K562 (cell line): ENCODE measurements at regions of chr11 and their contacts with region 1.

Region 1: DNA sequence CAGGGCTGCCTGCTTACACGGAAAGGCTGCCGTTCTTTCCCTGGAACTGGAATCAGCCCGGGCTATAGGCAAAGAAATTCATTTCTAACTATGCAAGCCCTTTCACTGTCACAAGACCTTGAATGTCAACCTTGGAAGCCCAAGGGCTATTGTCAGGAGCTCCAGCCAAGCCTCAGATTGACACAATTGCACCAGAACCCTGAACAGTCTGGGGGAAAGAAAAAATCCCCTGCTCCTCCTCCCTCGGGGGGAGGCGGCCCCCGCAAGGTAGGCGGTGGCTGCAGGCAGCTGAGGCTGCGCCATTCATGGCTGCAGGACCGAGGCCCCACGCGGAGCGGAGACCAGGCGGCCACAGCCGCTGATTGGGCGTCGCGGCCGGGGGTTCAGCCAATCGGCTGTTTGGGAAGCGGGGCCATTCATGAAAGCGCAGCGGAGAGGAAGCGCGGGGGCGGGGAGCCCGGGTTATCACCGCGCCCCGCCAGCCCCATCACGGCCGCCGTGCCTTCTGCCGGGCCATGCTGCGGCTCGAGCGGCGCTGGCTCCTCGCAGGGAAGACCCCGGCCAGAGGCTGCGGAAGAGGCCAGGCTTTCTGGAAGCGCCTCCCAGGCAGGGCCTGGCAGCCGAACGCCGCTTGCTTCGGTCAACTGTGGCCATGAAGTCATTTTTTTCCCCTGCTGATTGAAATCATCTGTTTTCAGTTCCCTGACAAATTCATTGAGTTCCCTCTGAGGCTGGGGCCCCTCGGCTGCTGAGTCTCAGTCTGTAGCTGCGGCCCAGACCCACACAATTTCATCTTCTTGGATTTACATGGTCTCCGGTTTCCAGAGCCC is 38.1 kb upstream of the LINC01488 start:
- DNase-seq: peak; percentile 99
- ATAC-seq: peak; percentile 94
- H3K4me3 ChIP-seq: peak overlapping the region; percentile 35
- H3K27ac ChIP-seq: peak overlapping the region; percentile 95
- H3K4me1 ChIP-seq: peaks cover 54 to 61% of the 10 kb centered on the region in 2 experiments
- H3K27me3 ChIP-seq: no peaks in the 10 kb centered on the region
- CTCF ChIP-seq: no peak
- EP300 ChIP-seq: no peak
- POLR2A ChIP-seq: peak; percentile 93
- RAD21 ChIP-seq: no peak; a peak in 1 of 4 replicates

Region 2: DNA sequence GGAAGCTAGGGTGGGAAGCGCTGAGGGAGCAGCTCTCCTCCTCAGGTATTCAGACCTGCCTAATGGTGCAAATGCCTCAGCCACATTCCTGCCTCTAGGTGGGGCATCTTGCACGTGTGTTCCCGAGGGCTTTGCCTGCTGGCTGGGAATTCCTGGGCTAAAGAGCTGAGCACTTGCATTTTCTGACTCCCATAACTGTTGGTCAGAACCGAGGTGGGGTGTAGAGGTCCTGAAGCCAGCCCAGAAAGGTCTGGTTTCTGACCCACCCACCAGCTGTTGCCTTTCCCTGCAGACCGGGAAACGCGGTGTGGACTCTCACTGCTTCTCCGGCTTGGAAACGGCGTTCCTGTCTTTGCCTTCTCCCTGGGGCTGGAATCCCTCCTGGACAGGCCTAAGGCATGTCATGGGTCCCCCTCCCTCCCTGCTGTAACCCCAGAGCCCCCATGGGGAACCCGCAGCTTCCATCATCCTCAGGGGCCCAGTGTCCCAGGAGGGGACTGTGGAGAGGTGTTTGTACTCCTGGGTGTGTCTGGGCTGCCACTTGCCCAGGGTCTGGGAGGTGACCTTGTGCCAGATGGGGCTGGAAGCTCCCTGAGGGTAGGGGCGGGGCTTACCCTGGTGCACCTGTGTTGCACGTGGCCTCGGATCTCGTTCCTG is 311.6 kb before region 1 on chr11:
- CTCF ChIA-PET with region 1: no interaction called
- POLR2A ChIA-PET with region 1: no interaction called
- in situ Hi-C with region 1: no loop called
- intact Hi-C with region 1: loop called (anchors 10 kb)
- DNase-seq: peak; percentile 59 to 72 (median 62)
- ATAC-seq: peak; percentile 91
- H3K4me3 ChIP-seq: no peak overlapping the region
- H3K27ac ChIP-seq: no peak overlapping the region
- H3K4me1 ChIP-seq: peaks cover 3 to 6% of the 10 kb centered on the region in 2 experiments; a peak in 2 of 5 replicates
- H3K27me3 ChIP-seq: peaks cover 0 to 8% of the 10 kb centered on the region in 2 experiments; a peak in 3 of 5 replicates
- CTCF ChIP-seq: peak; percentile 77 to 89 (median 86)
- EP300 ChIP-seq: no peak
- POLR2A ChIP-seq: no peak
- RAD21 ChIP-seq: peak; percentile 66 to 84

Region 3: GRCh38 chr11:69382131-69383128 is 60.9 kb before region 1 on chr11:
- CTCF ChIA-PET with region 1: no interaction called
- POLR2A ChIA-PET with region 1: interaction called, 5 read pairs
- in situ Hi-C with region 1: no loop called
- intact Hi-C with region 1: loop called (anchors 2 kb)
- DNase-seq: peak; percentile 92 to 98 (median 98)
- ATAC-seq: peak; percentile 89
- H3K4me3 ChIP-seq: peak overlapping the region; percentile 51
- H3K27ac ChIP-seq: peak overlapping the region; percentile 84
- H3K4me1 ChIP-seq: peaks cover 24 to 56% of the 10 kb centered on the region in 2 experiments
- H3K27me3 ChIP-seq: no peaks in the 10 kb centered on the region
- CTCF ChIP-seq: no peak
- EP300 ChIP-seq: peak; percentile 22; the same call in 1 of the 2 replicates
- POLR2A ChIP-seq: peak; percentile 87
- RAD21 ChIP-seq: peak in 1 of 2 experiments; percentile 5; a peak in 2 of 4 replicates

Region 4: GRCh38 chr11:69403556-69404215 is 39.7 kb before region 1 on chr11:
- CTCF ChIA-PET with region 1: no interaction called
- POLR2A ChIA-PET with region 1: interaction called, 3 read pairs
- in situ Hi-C with region 1: no loop called
- intact Hi-C with region 1: loop called (anchors 5 kb)
- DNase-seq: no peak
- ATAC-seq: no peak
- H3K4me3 ChIP-seq: no peak overlapping the region
- H3K27ac ChIP-seq: no peak overlapping the region; the same call in 2 of the 3 replicates
- H3K4me1 ChIP-seq: peaks cover 42 to 71% of the 10 kb centered on the region in 2 experiments
- H3K27me3 ChIP-seq: no peaks in the 10 kb centered on the region
- CTCF ChIP-seq: no peak
- EP300 ChIP-seq: no peak
- POLR2A ChIP-seq: no peak
- RAD21 ChIP-seq: no peak

Region 5: GRCh38 chr11:69609351-69609750 is 166.0 kb after region 1 on chr11:
- CTCF ChIA-PET with region 1: no interaction called
- POLR2A ChIA-PET with region 1: no interaction called
- in situ Hi-C with region 1: no loop called
- intact Hi-C with region 1: no loop called
- DNase-seq: no peak
- ATAC-seq: no peak
- H3K4me3 ChIP-seq: no peak overlapping the region
- H3K27ac ChIP-seq: no peak overlapping the region
- H3K4me1 ChIP-seq: no peaks in the 10 kb centered on the region
- H3K27me3 ChIP-seq: peaks cover 18 to 45% of the 10 kb centered on the region in 2 experiments
- CTCF ChIP-seq: no peak
- EP300 ChIP-seq: no peak
- POLR2A ChIP-seq: no peak
- RAD21 ChIP-seq: no peak

Region 6: GRCh38 chr11:69642913-69643632 is 199.7 kb after region 1 on chr11:
- CTCF ChIA-PET with region 1: interaction called, 3 read pairs
- POLR2A ChIA-PET with region 1: no interaction called
- in situ Hi-C with region 1: loop called (anchors 5 kb)
- intact Hi-C with region 1: loop called (anchors 5 kb)
- DNase-seq: peak; percentile 81 to 88 (median 84)
- ATAC-seq: peak; percentile 88
- H3K4me3 ChIP-seq: peak overlapping the region; percentile 54
- H3K27ac ChIP-seq: peak overlapping the region; percentile 66; the same call in 1 of the 3 replicates
- H3K4me1 ChIP-seq: peaks cover 8 to 80% of the 10 kb centered on the region in 2 experiments; a peak in 4 of 5 replicates
- H3K27me3 ChIP-seq: peaks cover 9 to 13% of the 10 kb centered on the region in 2 experiments
- CTCF ChIP-seq: peak; percentile 90 to 94 (median 92)
- EP300 ChIP-seq: no peak
- POLR2A ChIP-seq: no peak
- RAD21 ChIP-seq: peak; percentile 98